GM13976 (cell line): ENCODE measurements at regions of chr1 and their contacts with region 1.

Region 1: DNA sequence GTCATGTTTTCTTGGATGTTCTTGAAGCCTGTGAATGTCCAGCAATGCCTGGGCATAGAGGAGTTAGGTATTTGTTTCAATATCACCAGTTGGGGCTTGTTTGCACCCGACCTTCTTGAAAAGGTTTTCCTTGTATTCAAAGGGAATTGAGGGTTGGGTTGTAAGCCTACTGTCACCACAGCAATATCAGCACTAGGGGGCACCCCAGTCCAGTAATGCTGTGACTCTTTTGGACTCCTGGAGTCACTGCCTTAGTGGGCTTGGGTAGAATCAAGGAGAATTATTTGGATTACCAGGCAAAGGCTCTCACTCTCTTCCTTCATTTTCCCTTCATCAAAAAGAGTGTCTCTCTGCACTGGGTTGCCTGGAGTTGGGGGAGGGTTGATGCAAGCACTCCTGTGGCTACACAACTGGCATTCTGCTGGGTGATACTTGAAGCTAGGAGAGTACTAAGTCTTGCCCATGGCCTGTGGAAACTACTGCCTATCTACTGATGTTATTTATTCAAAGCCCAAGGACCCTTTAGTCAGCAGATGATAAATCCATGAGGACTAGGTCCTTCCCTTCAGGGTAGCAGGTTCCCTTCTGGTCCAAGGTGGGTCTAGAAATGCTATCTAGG is 34.5 kb downstream of the OR10R2 start:
- DNase-seq: peak; percentile 10
- CTCF ChIP-seq: peak; percentile 71

Region 2: GRCh38 chr1:158248118-158248517 is 258.4 kb before region 1 on chr1:
- in situ Hi-C with region 1: loop called (anchors 25 kb)
- DNase-seq: peak; percentile 41
- CTCF ChIP-seq: no peak

Region 3: GRCh38 chr1:159009704-159010361 is 503.4 kb after region 1 on chr1 and contains the start of gene IFI16:
- in situ Hi-C with region 1: loop called (anchors 10 kb)
- DNase-seq: peak; percentile 49
- CTCF ChIP-seq: no peak